T-cell (primary cell): ENCODE measurements at regions of chr6 and their contacts with region 1.

Region 1: DNA sequence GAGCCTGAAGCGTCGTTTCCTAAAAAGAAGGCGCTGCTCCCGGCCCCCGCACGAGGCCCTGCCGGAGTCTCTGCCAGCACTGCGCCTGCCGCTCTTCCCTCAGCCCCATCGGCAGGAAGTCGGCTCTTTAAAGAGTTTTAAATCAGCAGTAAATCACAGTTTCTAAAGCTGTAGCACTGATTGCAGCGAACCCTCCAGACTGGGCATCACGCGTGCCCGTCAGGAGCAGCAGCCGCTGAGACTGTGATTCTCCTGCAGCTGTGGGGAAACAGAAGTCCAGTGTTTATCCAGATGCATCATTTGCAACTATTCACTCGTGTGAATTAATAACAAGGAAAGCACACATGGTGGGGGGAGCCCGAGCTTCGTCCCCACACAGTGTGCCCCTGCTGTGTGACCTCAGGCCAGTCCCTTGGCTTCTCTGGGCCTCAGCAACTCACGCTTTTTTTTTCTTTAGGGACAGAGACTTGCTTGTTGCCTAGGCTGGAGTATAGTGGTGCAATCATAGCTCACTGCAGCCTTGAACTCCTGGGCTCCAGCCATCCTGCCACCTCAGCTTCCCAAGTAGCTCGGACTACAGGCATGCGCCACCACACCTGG is 28.3 kb downstream of the DLL1 start:
- DNase-seq: no peak
- ATAC-seq: no peak
- H3K4me3 ChIP-seq: no peak overlapping the region
- H3K4me3 Mint-ChIP-seq: no peak overlapping the region
- H3K27ac ChIP-seq: no peak overlapping the region
- H3K27ac Mint-ChIP-seq: no peak overlapping the region
- H3K4me1 ChIP-seq: no peaks in the 10 kb centered on the region
- H3K4me1 Mint-ChIP-seq: peaks cover 0 to 3% (median 0%) of the 10 kb centered on the region in 3 donors
- H3K27me3 ChIP-seq: peaks cover 0 to 46% of the 10 kb centered on the region in 2 experiments
- H3K27me3 Mint-ChIP-seq: peaks cover 9 to 24% of the 10 kb centered on the region in 2 donors

Region 2: DNA sequence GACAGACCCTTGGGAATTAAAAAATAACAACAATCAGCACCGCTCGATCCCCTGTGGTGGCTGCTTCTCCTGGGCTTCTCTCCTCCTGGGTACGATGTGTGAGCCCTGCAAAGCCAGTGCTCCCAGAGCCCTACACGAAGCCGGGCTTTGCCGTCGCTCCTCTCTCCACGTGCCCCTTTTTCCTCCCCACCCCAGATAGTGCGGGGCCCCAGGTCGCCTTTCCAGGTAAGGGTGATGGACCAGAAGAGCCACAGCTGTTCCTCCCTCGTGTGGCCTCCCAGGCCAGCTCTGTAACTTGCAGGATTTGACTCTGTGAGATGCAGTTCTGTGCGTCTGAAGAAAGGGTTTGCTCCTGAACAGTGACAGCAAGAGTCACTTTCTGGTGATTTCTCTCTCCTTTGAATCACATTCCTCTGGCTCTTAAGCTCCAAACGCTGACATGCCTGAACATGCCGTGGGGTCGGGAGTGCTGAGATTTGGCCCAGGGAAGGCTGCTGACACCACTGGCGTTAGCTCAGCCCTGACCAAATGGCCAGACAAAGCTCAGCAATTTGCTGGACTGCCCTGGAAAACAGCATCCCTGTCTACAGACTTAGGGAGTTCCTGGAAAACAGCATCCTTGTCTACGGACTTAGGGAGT is 30.9 kb before region 1 on chr6:
- CTCF ChIA-PET with region 1: no interaction called
- POLR2A ChIA-PET with region 1: no interaction called
- DNase-seq: no peak
- ATAC-seq: no peak
- H3K4me3 ChIP-seq: no peak overlapping the region
- H3K4me3 Mint-ChIP-seq: no peak overlapping the region
- H3K27ac ChIP-seq: no peak overlapping the region
- H3K27ac Mint-ChIP-seq: no peak overlapping the region
- H3K4me1 ChIP-seq: no peaks in the 10 kb centered on the region
- H3K4me1 Mint-ChIP-seq: no peaks in the 10 kb centered on the region
- H3K27me3 ChIP-seq: peaks cover 0 to 18% of the 10 kb centered on the region in 2 experiments
- H3K27me3 Mint-ChIP-seq: no peaks in the 10 kb centered on the region

Region 3: GRCh38 chr6:170250981-170251775 is 11.4 kb before region 1 on chr6:
- CTCF ChIA-PET with region 1: interaction called in 1 of 2 experiments, 14 read pairs
- POLR2A ChIA-PET with region 1: no interaction called
- DNase-seq: no peak
- ATAC-seq: no peak
- H3K4me3 ChIP-seq: no peak overlapping the region
- H3K4me3 Mint-ChIP-seq: no peak overlapping the region
- H3K27ac ChIP-seq: no peak overlapping the region
- H3K27ac Mint-ChIP-seq: no peak overlapping the region
- H3K4me1 ChIP-seq: no peaks in the 10 kb centered on the region
- H3K4me1 Mint-ChIP-seq: no peaks in the 10 kb centered on the region
- H3K27me3 ChIP-seq: peaks cover 0 to 50% of the 10 kb centered on the region in 2 experiments
- H3K27me3 Mint-ChIP-seq: peaks cover 4 to 14% of the 10 kb centered on the region in 2 donors